Activated B cell treated with CpG ODN at 0.5 μM for 24 hours (primary cell): ENCODE measurements at regions of chr15 and their contacts with region 1.

Region 1: GRCh38 chr15:79028411-79028964 is 62.1 kb downstream of the RASGRF1 start:
- DNase-seq: no peak
- ATAC-seq: peak; percentile 52
- H3K4me3 Mint-ChIP-seq: no peak overlapping the region
- H3K27ac Mint-ChIP-seq: no peak overlapping the region
- H3K4me1 Mint-ChIP-seq: peaks cover 11% of the 10 kb centered on the region
- H3K27me3 Mint-ChIP-seq: no peaks in the 10 kb centered on the region
- CTCF ChIP-seq: no peak

Region 2: DNA sequence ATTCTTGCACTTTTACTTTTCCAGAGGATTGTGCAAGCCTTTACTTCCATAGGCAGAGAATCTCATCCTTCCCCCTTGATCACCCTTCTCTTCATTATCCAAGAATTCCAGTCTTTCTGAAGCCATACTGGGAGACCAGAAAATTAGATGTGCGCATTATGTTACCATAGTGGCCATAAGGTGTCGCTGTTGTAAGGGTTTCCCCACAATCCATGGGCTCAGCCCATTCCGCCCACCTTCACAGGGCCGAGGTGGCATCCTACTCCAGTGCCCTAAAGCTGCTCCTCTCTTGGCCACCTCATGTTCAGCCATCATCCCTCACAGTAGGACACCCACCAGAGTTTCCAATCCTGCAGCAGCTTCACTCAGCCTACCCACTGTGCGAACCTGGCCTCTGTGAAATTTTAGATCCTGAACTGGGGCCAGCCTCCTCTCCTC is 118.7 kb before region 1 on chr15:
- CTCF ChIA-PET with region 1: interaction called, 151 read pairs
- POLR2A ChIA-PET with region 1: interaction called, 24 read pairs
- intact Hi-C with region 1: loop called (anchors 1 kb)
- DNase-seq: no peak
- ATAC-seq: peak; percentile 75
- H3K4me3 Mint-ChIP-seq: no peak overlapping the region
- H3K27ac Mint-ChIP-seq: peak overlapping the region; percentile 38
- H3K4me1 Mint-ChIP-seq: peaks cover 21% of the 10 kb centered on the region
- H3K27me3 Mint-ChIP-seq: no peaks in the 10 kb centered on the region
- CTCF ChIP-seq: no peak

Region 3: GRCh38 chr15:78930556-78931401 is 97.7 kb before region 1 on chr15:
- CTCF ChIA-PET with region 1: interaction called, 10 read pairs
- POLR2A ChIA-PET with region 1: interaction called, 11 read pairs
- intact Hi-C with region 1: no loop called
- DNase-seq: no peak
- ATAC-seq: no peak
- H3K4me3 Mint-ChIP-seq: no peak overlapping the region
- H3K27ac Mint-ChIP-seq: peak overlapping the region; percentile 53
- H3K4me1 Mint-ChIP-seq: peaks cover 8% of the 10 kb centered on the region
- H3K27me3 Mint-ChIP-seq: no peaks in the 10 kb centered on the region
- CTCF ChIP-seq: no peak

Region 4: DNA sequence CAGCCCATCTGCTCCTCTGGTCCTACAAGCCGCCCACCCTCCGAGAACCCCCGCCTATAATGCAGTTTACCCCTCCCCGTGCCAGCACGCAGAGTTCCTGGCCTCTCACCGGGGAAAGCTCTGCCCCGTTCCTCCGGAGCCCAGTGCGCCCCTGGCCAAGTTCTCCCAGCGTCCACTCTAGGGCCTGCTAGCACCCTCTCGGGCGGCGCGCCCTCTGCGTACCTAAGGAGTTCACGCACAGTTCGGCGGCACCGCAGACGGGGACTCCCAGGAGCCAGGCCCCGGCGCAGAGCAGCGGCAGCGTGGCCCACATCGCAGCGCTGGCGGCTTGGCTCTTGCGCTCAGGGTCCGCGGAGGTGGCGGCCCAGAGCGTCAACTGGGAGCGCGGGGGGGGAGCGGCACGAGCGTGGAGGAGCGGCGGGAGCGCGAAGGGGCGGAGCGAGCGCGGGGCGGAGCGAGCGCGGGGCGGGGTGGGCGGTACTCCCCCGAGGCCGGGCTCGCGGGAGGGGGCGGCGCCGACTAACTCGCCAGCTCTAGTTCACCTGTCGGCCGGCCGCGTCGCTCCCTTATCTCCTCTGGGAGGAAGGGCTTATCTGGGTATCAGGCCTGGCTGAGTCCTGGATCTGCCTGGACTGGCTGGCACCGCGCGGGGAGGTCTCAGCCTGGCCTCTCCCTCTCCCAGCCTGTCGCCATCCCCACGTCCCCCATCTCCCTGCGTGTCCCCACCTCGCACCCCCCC is 83.7 kb before region 1 on chr15 and contains the start of gene CTSH:
- CTCF ChIA-PET with region 1: interaction called, 9 read pairs
- POLR2A ChIA-PET with region 1: interaction called, 14 read pairs
- intact Hi-C with region 1: no loop called
- DNase-seq: peak; percentile 91
- ATAC-seq: peak; percentile 95
- H3K4me3 Mint-ChIP-seq: peak within 1 kb of the TSS; percentile 98
- H3K27ac Mint-ChIP-seq: peak within 1 kb of the TSS; percentile 89
- H3K4me1 Mint-ChIP-seq: peaks cover 40% of the 10 kb centered on the region
- H3K27me3 Mint-ChIP-seq: no peaks in the 10 kb centered on the region
- CTCF ChIP-seq: no peak
- total RNA-seq, gene CTSH: 721 and 762 TPM in 2 replicates

Region 5: GRCh38 chr15:79004336-79004735 is 24.2 kb before region 1 on chr15:
- CTCF ChIA-PET with region 1: interaction called, 15 read pairs
- POLR2A ChIA-PET with region 1: interaction called, 3 read pairs
- intact Hi-C with region 1: loop called (anchors 2 kb)
- DNase-seq: peak; percentile 43
- ATAC-seq: peak; percentile 87
- H3K4me3 Mint-ChIP-seq: peak overlapping the region; percentile 65
- H3K27ac Mint-ChIP-seq: peak overlapping the region; percentile 93
- H3K4me1 Mint-ChIP-seq: peaks cover 58% of the 10 kb centered on the region
- H3K27me3 Mint-ChIP-seq: no peaks in the 10 kb centered on the region
- CTCF ChIP-seq: no peak

Region 6: DNA sequence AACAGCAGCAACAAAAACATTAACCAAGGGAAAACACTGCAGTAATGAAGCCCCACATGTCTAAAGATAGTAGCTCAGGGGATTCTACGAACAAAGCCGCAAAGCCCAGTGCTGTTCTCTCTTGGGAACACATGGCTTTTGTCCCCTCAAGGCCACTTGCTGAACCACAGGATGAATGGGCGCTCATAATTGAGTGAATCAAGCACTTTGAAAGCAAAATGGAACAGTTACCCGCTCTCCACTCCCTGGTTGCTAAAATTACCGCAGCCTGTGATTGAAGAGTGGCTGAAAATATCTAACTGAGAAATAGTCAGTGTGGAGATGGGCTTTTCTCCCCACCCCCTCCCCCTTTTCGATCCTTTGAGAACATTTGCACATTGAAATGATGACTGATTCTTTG is 22.5 kb after region 1 on chr15:
- CTCF ChIA-PET with region 1: no interaction called
- POLR2A ChIA-PET with region 1: no interaction called
- intact Hi-C with region 1: no loop called
- DNase-seq: no peak
- ATAC-seq: no peak
- H3K4me3 Mint-ChIP-seq: no peak overlapping the region
- H3K27ac Mint-ChIP-seq: no peak overlapping the region
- H3K4me1 Mint-ChIP-seq: no peaks in the 10 kb centered on the region
- H3K27me3 Mint-ChIP-seq: peaks cover 9% of the 10 kb centered on the region
- CTCF ChIP-seq: no peak

Region 7: DNA sequence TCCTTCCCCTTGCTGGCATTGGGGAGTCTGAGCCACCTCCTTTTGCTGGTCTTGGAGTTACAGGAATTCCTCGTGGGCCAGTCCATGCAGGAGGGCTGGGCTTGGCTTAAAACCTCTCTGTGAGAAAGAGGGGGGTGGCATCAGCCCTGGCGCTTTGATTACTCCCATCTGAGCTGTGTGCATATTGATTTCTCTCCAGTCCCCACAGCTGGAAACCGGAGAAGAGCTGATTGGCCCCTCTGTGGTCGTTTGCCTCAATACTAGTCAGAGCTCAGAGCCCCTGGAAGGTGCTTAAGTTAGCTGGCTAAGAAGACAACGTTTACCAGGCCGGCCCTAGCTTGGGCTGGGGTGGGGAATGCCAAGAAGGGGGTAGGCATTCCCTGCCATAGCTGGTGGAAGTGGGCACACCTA is 66.1 kb after region 1 on chr15:
- CTCF ChIA-PET with region 1: no interaction called
- POLR2A ChIA-PET with region 1: no interaction called
- intact Hi-C with region 1: no loop called
- DNase-seq: no peak
- ATAC-seq: no peak
- H3K4me3 Mint-ChIP-seq: no peak overlapping the region
- H3K27ac Mint-ChIP-seq: no peak overlapping the region
- H3K4me1 Mint-ChIP-seq: peaks cover 17% of the 10 kb centered on the region
- H3K27me3 Mint-ChIP-seq: peaks cover 45% of the 10 kb centered on the region
- CTCF ChIP-seq: no peak

Region 8: GRCh38 chr15:79192462-79193036 is 164.1 kb after region 1 on chr15:
- CTCF ChIA-PET with region 1: interaction called, 10 read pairs
- POLR2A ChIA-PET with region 1: no interaction called
- intact Hi-C with region 1: no loop called
- DNase-seq: no peak
- ATAC-seq: no peak
- H3K4me3 Mint-ChIP-seq: no peak overlapping the region
- H3K27ac Mint-ChIP-seq: no peak overlapping the region
- H3K4me1 Mint-ChIP-seq: no peaks in the 10 kb centered on the region
- H3K27me3 Mint-ChIP-seq: peaks cover 16% of the 10 kb centered on the region
- CTCF ChIP-seq: no peak

Region 9: DNA sequence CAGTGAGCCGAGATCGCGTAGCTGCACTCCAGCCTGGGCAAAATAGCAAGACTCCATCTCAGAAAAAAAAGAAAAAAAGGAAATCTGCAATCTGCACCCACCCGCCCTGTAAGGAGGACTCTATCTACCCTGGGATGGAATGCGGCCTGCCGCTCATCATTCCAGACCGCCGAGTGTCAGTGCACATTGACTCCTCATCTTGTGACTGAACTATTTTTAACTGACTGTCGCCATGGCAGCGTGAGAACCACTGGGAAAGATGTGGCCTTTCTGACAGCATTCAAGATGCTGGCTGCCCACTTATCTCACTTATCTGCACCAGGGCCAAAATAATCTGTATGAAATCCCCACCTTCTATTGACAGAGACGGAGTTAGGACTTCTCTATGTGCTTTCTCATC is 215.2 kb after region 1 on chr15:
- CTCF ChIA-PET with region 1: no interaction called
- POLR2A ChIA-PET with region 1: no interaction called
- intact Hi-C with region 1: no loop called
- DNase-seq: no peak
- ATAC-seq: no peak
- H3K4me3 Mint-ChIP-seq: no peak overlapping the region
- H3K27ac Mint-ChIP-seq: no peak overlapping the region
- H3K4me1 Mint-ChIP-seq: no peaks in the 10 kb centered on the region
- H3K27me3 Mint-ChIP-seq: peaks cover 19% of the 10 kb centered on the region
- CTCF ChIP-seq: no peak

Region 10: GRCh38 chr15:79853458-79854328 is 825.2 kb after region 1 on chr15:
- CTCF ChIA-PET with region 1: no interaction called
- POLR2A ChIA-PET with region 1: no interaction called
- intact Hi-C with region 1: loop called (anchors 5 kb)
- DNase-seq: peak; percentile 20
- ATAC-seq: peak; percentile 99
- H3K4me3 Mint-ChIP-seq: no peak overlapping the region
- H3K27ac Mint-ChIP-seq: no peak overlapping the region
- H3K4me1 Mint-ChIP-seq: peaks cover 23% of the 10 kb centered on the region
- H3K27me3 Mint-ChIP-seq: no peaks in the 10 kb centered on the region
- CTCF ChIP-seq: peak; percentile 76